PC-9 (cell line): ENCODE measurements at regions of chr6 and their contacts with region 1.

Region 1: GRCh38 chr6:76532647-76533046 is 460.2 kb upstream of the IMPG1 start:
- DNase-seq: no peak
- H3K4me3 ChIP-seq: no peak overlapping the region
- H3K27ac ChIP-seq: no peak overlapping the region
- H3K4me1 ChIP-seq: no peaks in the 10 kb centered on the region
- H3K27me3 ChIP-seq: no peaks in the 10 kb centered on the region
- CTCF ChIP-seq: no peak

Region 2: DNA sequence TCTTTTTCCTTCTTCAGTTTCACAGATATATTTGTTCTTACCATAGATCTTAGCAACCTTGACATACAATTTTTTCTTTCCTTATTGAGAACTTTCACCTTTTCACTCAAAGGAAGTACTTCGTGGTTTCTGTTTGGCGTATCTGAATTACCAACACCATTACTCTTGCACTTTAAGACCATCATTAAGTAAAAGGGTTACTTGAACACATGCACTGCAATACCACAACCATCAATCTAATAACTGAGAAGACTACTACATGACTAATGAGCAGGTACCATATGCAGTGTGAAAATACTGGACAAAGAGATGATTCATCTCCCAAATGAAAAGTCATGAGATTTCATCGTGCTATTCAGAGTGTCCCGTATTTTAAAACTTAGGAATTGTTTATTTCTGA is 952.7 kb before region 1 on chr6:
- CTCF ChIA-PET with region 1: no interaction called
- POLR2A ChIA-PET with region 1: no interaction called
- intact Hi-C with region 1: loop called (anchors 10 kb)
- DNase-seq: no peak
- H3K4me3 ChIP-seq: no peak overlapping the region
- H3K27ac ChIP-seq: no peak overlapping the region
- H3K4me1 ChIP-seq: no peaks in the 10 kb centered on the region
- H3K27me3 ChIP-seq: no peaks in the 10 kb centered on the region
- CTCF ChIP-seq: no peak

Region 3: GRCh38 chr6:76472858-76473257 is 59.8 kb before region 1 on chr6:
- CTCF ChIA-PET with region 1: no interaction called
- POLR2A ChIA-PET with region 1: no interaction called
- intact Hi-C with region 1: no loop called
- DNase-seq: no peak
- H3K4me3 ChIP-seq: no peak overlapping the region
- H3K27ac ChIP-seq: no peak overlapping the region
- H3K4me1 ChIP-seq: no peaks in the 10 kb centered on the region
- H3K27me3 ChIP-seq: no peaks in the 10 kb centered on the region
- CTCF ChIP-seq: no peak

Region 4: DNA sequence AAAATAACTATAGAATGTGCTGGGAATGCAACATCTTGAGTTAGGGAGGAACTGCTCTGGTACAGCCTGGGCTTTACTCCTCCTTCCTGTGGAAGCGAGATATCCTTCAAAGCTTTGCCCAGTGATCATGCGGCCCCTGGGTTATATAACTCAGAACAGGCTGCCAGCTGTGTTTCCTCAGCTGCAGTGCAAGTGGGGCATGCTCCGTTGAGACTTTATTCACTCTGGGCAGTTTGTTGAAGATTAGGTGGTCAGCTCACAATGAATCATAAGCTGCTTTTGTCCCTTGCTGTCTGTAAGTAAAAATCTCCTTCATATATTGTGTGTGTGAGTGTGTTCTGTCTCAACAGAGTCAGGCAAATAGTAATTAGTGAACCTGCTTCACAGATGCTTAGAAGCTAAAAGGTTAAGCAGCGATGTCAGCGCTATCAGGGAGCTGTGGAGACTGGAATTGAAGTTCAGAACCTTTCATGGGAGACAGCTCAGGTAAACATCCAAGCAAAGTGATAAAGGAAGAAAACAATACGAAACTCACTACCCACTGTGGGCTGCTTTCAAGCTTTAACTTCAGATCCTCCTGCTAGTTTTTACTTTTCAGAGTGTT is 242.2 kb after region 1 on chr6:
- CTCF ChIA-PET with region 1: no interaction called
- POLR2A ChIA-PET with region 1: no interaction called
- intact Hi-C with region 1: no loop called
- DNase-seq: no peak
- H3K4me3 ChIP-seq: no peak overlapping the region
- H3K27ac ChIP-seq: no peak overlapping the region
- H3K4me1 ChIP-seq: no peaks in the 10 kb centered on the region
- H3K27me3 ChIP-seq: no peaks in the 10 kb centered on the region
- CTCF ChIP-seq: no peak